ENCODE measurements at regions of chr17 and their contacts with region 1.

Region 1: DNA sequence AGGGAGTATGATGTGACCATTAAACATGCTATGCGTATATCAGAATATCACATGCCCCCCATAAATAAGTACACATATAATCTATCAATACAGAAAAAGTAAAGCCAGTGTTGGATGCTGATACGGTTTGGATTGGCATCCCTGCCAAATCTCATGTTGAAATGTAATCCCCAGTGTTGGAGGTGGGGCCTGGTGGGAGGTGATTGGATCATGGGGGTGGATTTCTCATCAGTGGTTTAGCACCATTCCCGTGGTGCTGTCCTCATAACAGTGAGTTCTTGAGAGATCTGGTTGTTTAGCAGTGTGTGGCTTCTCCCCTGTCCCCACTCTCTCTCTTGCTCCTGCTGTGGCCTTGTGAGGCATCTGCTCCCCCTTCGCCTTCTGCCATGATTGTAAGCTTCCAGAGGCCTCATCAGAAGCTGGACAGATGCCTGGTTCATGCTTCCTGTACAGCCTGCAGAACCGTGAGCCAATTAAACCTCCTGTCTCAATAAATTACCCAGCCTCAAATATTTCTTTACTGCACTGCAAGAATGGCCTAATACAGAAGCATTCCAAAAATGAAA is 88.9 kb downstream of the AATF start:
- DNase-seq: no peak
- ATAC-seq: no peak
- H3K4me3 ChIP-seq: no peak overlapping the region
- H3K27ac ChIP-seq: no peak overlapping the region
- H3K4me1 ChIP-seq: no peaks in the 10 kb centered on the region
- H3K27me3 ChIP-seq: no peaks in the 10 kb centered on the region
- CTCF ChIP-seq: no peak
- POLR2A ChIP-seq: no peak

Region 2: GRCh38 chr17:36632916-36633771 is 404.5 kb before region 1 on chr17:
- intact Hi-C with region 1: loop called in 1 of 2 experiments (anchors 10 kb)
- DNase-seq: no peak
- ATAC-seq: no peak
- H3K4me3 ChIP-seq: no peak overlapping the region
- H3K27ac ChIP-seq: no peak overlapping the region
- H3K4me1 ChIP-seq: no peaks in the 10 kb centered on the region
- H3K27me3 ChIP-seq: no peaks in the 10 kb centered on the region
- CTCF ChIP-seq: no peak
- POLR2A ChIP-seq: no peak

Measured in right lobe of liver (tissue), 6 donors.